CD14-positive monocyte (primary cell): ENCODE measurements at regions of chr19 and their contacts with region 1.

Region 1: DNA sequence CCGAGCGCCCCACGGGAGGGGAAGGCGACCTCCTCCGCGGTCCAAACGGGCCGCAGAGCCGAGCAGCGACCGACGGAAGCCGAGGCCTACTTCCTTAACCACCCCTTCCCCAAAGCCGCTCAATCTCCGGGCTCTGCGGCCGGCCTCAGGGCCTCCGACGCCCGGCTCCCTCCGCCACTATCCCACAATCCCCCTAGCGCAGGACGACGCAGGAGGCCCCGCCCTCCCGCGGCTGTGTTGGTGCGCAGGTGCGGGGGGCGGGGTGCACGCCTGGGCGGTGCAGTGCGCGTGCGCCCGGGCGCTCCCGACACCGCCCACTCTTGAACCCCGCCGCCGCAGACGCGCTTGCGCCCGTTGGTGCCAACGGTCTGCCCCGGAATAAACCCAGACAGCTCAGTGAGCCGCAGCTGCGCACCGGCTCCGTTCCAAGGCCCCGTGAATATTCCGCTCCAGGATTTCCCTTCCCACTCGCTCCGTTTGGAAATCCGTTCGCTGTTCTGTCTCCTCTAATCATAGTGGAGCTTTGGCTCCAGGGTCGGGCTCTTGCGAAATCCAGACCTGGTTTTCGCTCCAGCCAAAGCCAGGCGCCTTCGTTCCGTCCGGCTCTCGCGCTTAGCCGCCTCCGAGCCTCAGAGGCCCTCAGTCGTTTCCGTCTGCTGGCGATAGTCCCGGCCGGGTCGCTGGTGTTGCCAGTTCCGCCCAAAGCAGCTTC is at the start of gene PPP6R1:
- DNase-seq: peak; percentile 93 to 97 (median 94)
- H3K4me3 ChIP-seq: peak within 1 kb of the TSS; percentile 61 to 94 (median 66)
- H3K4me3 Mint-ChIP-seq: peak within 1 kb of the TSS; percentile 98 to 100
- H3K27ac ChIP-seq: peak within 1 kb of the TSS; percentile 89 to 92
- H3K27ac Mint-ChIP-seq: peak within 1 kb of the TSS; percentile 94 to 99 (median 97)
- H3K4me1 ChIP-seq: peaks cover 45 to 49% of the 10 kb centered on the region in 2 donors
- H3K4me1 Mint-ChIP-seq: peaks cover 46% of the 10 kb centered on the region
- H3K27me3 ChIP-seq: no peaks in the 10 kb centered on the region
- H3K27me3 Mint-ChIP-seq: no peaks in the 10 kb centered on the region
- CTCF ChIP-seq: no peak
- polyA plus RNA-seq, gene PPP6R1: 16.9 to 91.3 (median 22.0) TPM

Region 2: GRCh38 chr19:55117636-55118391 is 141.2 kb before region 1 on chr19 and contains the start of gene PPP1R12C:
- intact Hi-C with region 1: loop called in 1 of 2 experiments (anchors 10 kb)
- DNase-seq: peak; percentile 97 to 98 (median 97)
- H3K4me3 ChIP-seq: peak within 1 kb of the TSS; percentile 81 to 94 (median 90)
- H3K4me3 Mint-ChIP-seq: peak within 1 kb of the TSS; percentile 95 to 100
- H3K27ac ChIP-seq: peak within 1 kb of the TSS; percentile 80 to 84
- H3K27ac Mint-ChIP-seq: peak within 1 kb of the TSS; percentile 97 to 99 (median 97)
- H3K4me1 ChIP-seq: peaks cover 25 to 52% of the 10 kb centered on the region in 2 donors
- H3K4me1 Mint-ChIP-seq: peaks cover 45% of the 10 kb centered on the region
- H3K27me3 ChIP-seq: peaks cover 0 to 3% of the 10 kb centered on the region in 2 donors
- H3K27me3 Mint-ChIP-seq: peaks cover 6 to 19% (median 14%) of the 10 kb centered on the region in 3 donors
- CTCF ChIP-seq: no peak
- polyA plus RNA-seq, gene PPP1R12C: 2.1 to 206 (median 2.6) TPM

Region 3: GRCh38 chr19:55178781-55179599 is 80.0 kb before region 1 on chr19:
- intact Hi-C with region 1: no loop called
- DNase-seq: peak; percentile 42 to 63 (median 49)
- H3K4me3 ChIP-seq: peak overlapping the region in 1 of 3 experiments; percentile 45
- H3K4me3 Mint-ChIP-seq: peak overlapping the region; percentile 24 to 76
- H3K27ac ChIP-seq: no peak overlapping the region
- H3K27ac Mint-ChIP-seq: peak overlapping the region in 2 of 7 donors; percentile 36 to 49
- H3K4me1 ChIP-seq: peaks cover 14 to 21% of the 10 kb centered on the region in 2 donors
- H3K4me1 Mint-ChIP-seq: peaks cover 18% of the 10 kb centered on the region
- H3K27me3 ChIP-seq: peaks cover 24 to 81% of the 10 kb centered on the region in 2 donors
- H3K27me3 Mint-ChIP-seq: peaks cover 78 to 88% (median 83%) of the 10 kb centered on the region in 3 donors
- CTCF ChIP-seq: no peak

Region 4: GRCh38 chr19:55216461-55217198 is 42.4 kb before region 1 on chr19:
- intact Hi-C with region 1: loop called (anchors 1 to 5 kb)
- DNase-seq: peak; percentile 75 to 91 (median 83)
- H3K4me3 ChIP-seq: peak overlapping the region; percentile 1 to 61 (median 41)
- H3K4me3 Mint-ChIP-seq: peak overlapping the region; percentile 74 to 88
- H3K27ac ChIP-seq: peak overlapping the region; percentile 53 to 83
- H3K27ac Mint-ChIP-seq: peak overlapping the region; percentile 85 to 97 (median 94)
- H3K4me1 ChIP-seq: peaks cover 12 to 17% of the 10 kb centered on the region in 2 donors
- H3K4me1 Mint-ChIP-seq: peaks cover 12% of the 10 kb centered on the region
- H3K27me3 ChIP-seq: no peaks in the 10 kb centered on the region
- H3K27me3 Mint-ChIP-seq: peaks cover 10 to 14% (median 10%) of the 10 kb centered on the region in 3 donors
- CTCF ChIP-seq: no peak

Region 5: GRCh38 chr19:55279770-55280643 is 21.0 kb after region 1 on chr19 and contains the start of gene HSPBP1:
- intact Hi-C with region 1: loop called in 1 of 2 experiments (anchors 2 kb)
- DNase-seq: peak; percentile 82 to 84 (median 83)
- H3K4me3 ChIP-seq: peak within 1 kb of the TSS; percentile 53 to 98 (median 78)
- H3K4me3 Mint-ChIP-seq: peak within 1 kb of the TSS; percentile 98 to 99
- H3K27ac ChIP-seq: peak within 1 kb of the TSS; percentile 70 to 81
- H3K27ac Mint-ChIP-seq: peak within 1 kb of the TSS; percentile 92 to 99 (median 96)
- H3K4me1 ChIP-seq: peaks cover 30 to 39% of the 10 kb centered on the region in 2 donors
- H3K4me1 Mint-ChIP-seq: peaks cover 37% of the 10 kb centered on the region
- H3K27me3 ChIP-seq: peaks cover 0 to 8% of the 10 kb centered on the region in 2 donors
- H3K27me3 Mint-ChIP-seq: peaks cover 12 to 18% (median 18%) of the 10 kb centered on the region in 3 donors
- CTCF ChIP-seq: no peak
- polyA plus RNA-seq, gene HSPBP1: 12.3 to 17.0 (median 15.3) TPM

Region 6: GRCh38 chr19:55289117-55289796 is 30.3 kb after region 1 on chr19:
- intact Hi-C with region 1: loop called in 1 of 2 experiments (anchors 5 kb)
- DNase-seq: no peak
- H3K4me3 ChIP-seq: no peak overlapping the region
- H3K4me3 Mint-ChIP-seq: no peak overlapping the region
- H3K27ac ChIP-seq: no peak overlapping the region
- H3K27ac Mint-ChIP-seq: no peak overlapping the region
- H3K4me1 ChIP-seq: no peaks in the 10 kb centered on the region
- H3K4me1 Mint-ChIP-seq: no peaks in the 10 kb centered on the region
- H3K27me3 ChIP-seq: no peaks in the 10 kb centered on the region
- H3K27me3 Mint-ChIP-seq: peaks cover 10 to 13% (median 13%) of the 10 kb centered on the region in 3 donors
- CTCF ChIP-seq: no peak

Region 7: DNA sequence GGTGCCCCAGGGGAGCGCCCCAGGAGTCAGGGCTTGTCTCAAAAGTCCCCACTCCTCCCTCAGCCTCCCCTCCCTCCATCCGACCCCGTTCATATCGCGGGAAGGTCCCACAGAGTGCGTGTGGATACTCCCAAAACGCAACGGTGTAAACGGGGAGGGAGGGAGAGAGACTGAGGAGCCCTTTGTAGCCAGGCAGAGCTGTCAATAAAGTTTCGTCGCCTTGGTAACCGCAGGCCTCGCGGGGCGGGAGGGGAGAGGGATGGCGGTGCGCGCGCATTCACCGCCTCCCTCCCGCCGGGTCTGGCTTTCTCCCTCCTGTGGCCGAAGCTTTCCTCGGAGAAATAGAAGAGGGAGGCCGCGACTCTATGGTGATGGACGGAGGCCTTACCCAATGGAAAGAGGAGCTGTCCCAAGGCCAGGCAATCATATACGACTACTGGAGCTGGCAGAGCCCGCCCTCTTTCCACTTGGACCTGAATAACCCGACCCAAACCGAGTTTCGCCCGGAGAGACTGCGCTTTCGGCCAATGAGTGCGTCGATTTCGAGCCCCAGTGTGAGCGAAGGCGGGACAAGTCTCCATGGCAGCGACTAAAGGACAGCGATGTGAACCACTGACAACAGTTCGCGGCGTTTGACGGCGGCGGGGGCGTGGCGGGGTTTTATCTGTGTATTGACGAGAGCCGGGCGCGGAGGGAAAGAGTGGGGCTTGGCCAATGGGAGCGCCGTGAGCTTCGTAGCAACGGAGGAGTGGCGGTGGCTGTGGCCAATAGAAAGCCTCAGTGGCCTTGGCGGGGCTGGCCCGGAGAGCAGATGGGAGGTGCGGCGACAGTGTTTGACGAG is 80.3 kb after region 1 on chr19 and contains the start of gene KMT5C:
- intact Hi-C with region 1: loop called in 1 of 2 experiments (anchors 1 kb)
- DNase-seq: peak; percentile 100
- H3K4me3 ChIP-seq: peak within 1 kb of the TSS; percentile 48 to 83 (median 69)
- H3K4me3 Mint-ChIP-seq: peak within 1 kb of the TSS; percentile 82 to 90
- H3K27ac ChIP-seq: peak within 1 kb of the TSS; percentile 97 to 99
- H3K27ac Mint-ChIP-seq: peak within 1 kb of the TSS; percentile 97 to 99 (median 99)
- H3K4me1 ChIP-seq: peaks cover 31 to 39% of the 10 kb centered on the region in 2 donors
- H3K4me1 Mint-ChIP-seq: peaks cover 27% of the 10 kb centered on the region
- H3K27me3 ChIP-seq: no peaks in the 10 kb centered on the region
- H3K27me3 Mint-ChIP-seq: peaks cover 0 to 5% (median 2%) of the 10 kb centered on the region in 3 donors
- CTCF ChIP-seq: peak; percentile 12
- polyA plus RNA-seq, gene KMT5C: 0.89 to 26.9 (median 1.5) TPM

Region 8: DNA sequence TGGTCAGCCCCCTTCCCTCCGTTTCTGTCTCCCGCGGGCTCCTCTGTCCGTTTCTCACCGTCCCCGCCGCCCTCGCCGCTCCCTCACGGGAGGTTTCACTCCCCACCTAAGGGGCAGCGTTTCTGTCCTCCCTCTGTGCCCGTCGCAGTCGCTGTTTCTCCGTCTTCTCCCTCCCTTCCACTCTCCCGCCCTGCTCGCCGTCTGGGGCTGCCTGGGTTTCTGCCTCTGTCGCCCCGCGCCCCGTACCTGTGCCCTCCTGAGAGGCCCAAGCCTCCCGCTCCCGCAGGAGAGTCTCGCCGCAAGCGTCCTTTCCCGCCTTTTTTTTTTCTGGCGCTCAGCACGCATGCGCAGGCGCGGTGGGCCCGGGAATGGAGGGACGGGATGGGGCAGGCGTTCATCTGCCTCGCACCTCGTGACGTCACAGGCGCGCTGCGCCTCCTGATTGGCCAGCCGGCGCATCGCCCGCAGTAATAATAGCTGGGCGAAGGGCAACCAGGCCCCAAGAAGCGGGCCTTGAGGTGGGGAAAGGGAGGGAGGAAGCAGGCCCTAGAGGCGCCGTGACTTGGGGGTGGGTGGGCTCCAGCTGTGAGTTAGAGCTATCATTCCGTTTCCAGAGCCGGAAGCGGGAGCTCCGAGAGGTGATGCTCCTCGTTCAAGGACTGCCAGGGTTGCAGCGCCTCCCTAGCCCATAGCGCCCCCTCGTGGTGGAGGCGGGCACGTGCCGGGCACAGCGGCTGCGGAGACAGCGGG is 244.7 kb after region 1 on chr19:
- intact Hi-C with region 1: no loop called
- DNase-seq: peak; percentile 91 to 93 (median 92)
- H3K4me3 ChIP-seq: peak overlapping the region; percentile 24 to 77 (median 51)
- H3K4me3 Mint-ChIP-seq: peak overlapping the region; percentile 80 to 90
- H3K27ac ChIP-seq: peak overlapping the region; percentile 28 to 48
- H3K27ac Mint-ChIP-seq: peak overlapping the region; percentile 2 to 89 (median 80)
- H3K4me1 ChIP-seq: peaks cover 5 to 11% of the 10 kb centered on the region in 2 donors
- H3K4me1 Mint-ChIP-seq: peaks cover 9% of the 10 kb centered on the region
- H3K27me3 ChIP-seq: peaks cover 0 to 3% of the 10 kb centered on the region in 2 donors
- H3K27me3 Mint-ChIP-seq: peaks cover 5 to 14% (median 11%) of the 10 kb centered on the region in 3 donors
- CTCF ChIP-seq: peak; percentile 100